Activated CD4-positive, alpha-beta memory T cell treated with anti-CD3 and anti-CD28 coated beads for 36 hours (primary cell): ENCODE measurements at regions of chr16 and their contacts with region 1.

Region 1: GRCh38 chr16:67999985-68000384 is 701 bp upstream of the DPEP2 start:
- DNase-seq: no peak
- H3K4me3 Mint-ChIP-seq: peak overlapping the region; percentile 72
- H3K27ac Mint-ChIP-seq: peak overlapping the region; percentile 88
- H3K4me1 Mint-ChIP-seq: peaks cover 52% of the 10 kb centered on the region
- H3K27me3 Mint-ChIP-seq: no peaks in the 10 kb centered on the region

Region 2: GRCh38 chr16:67968400-67969253 is 31.4 kb before region 1 on chr16 and contains the start of gene SLC12A4:
- CTCF ChIA-PET with region 1: no interaction called
- POLR2A ChIA-PET with region 1: no interaction called
- intact Hi-C with region 1: loop called (anchors 2 kb)
- DNase-seq: peak; percentile 94
- H3K4me3 Mint-ChIP-seq: peak within 1 kb of the TSS; percentile 99
- H3K27ac Mint-ChIP-seq: peak within 1 kb of the TSS; percentile 78
- H3K4me1 Mint-ChIP-seq: peaks cover 18% of the 10 kb centered on the region
- H3K27me3 Mint-ChIP-seq: no peaks in the 10 kb centered on the region
- total RNA-seq, gene SLC12A4: 27.1 to 29.9 TPM

Region 3: DNA sequence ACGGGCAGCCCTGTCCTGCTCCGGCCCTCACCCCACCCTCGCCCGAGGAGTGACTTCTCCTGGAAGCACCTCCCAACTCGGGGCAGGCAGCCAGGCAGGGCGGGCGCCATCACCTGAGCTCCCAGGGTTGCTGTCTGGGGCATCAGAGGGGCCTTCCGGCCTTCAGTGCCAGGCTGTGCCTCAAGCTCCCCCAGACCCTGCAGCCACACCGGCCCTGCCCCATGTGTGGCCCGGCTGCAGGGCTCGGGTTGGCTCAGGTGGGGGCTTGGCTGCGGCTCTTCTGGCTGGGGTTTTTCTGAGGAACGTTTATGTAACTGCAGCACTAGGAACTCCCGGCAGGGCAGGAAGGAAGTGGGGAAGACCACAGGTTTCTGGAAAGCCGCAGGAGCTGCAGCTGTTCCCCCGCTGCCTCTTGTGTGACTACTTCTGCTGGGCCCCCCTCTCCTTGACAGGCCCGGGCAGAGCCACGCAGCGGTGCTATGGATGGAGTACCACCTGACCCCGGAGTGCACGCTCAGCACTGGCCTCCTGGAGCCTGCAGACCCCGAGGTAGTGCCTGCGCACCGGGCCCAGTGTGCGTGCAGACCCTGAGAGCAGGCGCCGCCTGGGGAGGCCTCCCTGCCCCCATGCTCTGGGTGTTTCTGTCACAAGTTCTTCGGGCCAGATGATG is 356.4 kb after region 1 on chr16:
- CTCF ChIA-PET with region 1: no interaction called
- POLR2A ChIA-PET with region 1: no interaction called
- intact Hi-C with region 1: no loop called
- DNase-seq: peak; percentile 85
- H3K4me3 Mint-ChIP-seq: no peak overlapping the region
- H3K27ac Mint-ChIP-seq: no peak overlapping the region
- H3K4me1 Mint-ChIP-seq: peaks cover 28% of the 10 kb centered on the region
- H3K27me3 Mint-ChIP-seq: no peaks in the 10 kb centered on the region